Spleen (tissue), 13 donors: ENCODE measurements at regions of chr7 and their contacts with region 1.

Region 1: DNA sequence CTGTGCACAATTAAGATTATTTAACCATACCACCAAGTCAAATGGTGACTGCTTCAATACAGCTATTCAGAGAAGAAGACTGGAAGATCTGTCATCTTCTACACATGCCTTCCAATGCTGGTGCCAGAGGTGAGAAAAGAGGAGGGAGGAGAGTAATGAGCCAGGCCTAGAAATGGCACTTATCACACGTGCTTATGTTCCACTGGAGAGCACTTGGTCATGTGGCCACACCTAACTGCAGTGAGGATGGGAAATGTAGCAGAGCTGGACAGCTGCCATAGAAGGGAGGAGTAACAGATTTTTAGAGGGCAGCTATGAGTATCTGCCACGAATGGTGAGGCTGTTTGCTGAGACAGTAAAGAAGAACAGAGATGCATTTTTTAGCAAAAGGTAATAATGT is 77.1 kb downstream of the MPLKIP start:
- DNase-seq: no peak
- H3K4me3 ChIP-seq: no peak overlapping the region
- H3K27ac ChIP-seq: no peak overlapping the region
- H3K4me1 ChIP-seq: peaks cover 0 to 5% (median 2%) of the 10 kb centered on the region in 6 donors
- H3K27me3 ChIP-seq: no peaks in the 10 kb centered on the region
- CTCF ChIP-seq: no peak
- POLR2A ChIP-seq: no peak

Region 2: DNA sequence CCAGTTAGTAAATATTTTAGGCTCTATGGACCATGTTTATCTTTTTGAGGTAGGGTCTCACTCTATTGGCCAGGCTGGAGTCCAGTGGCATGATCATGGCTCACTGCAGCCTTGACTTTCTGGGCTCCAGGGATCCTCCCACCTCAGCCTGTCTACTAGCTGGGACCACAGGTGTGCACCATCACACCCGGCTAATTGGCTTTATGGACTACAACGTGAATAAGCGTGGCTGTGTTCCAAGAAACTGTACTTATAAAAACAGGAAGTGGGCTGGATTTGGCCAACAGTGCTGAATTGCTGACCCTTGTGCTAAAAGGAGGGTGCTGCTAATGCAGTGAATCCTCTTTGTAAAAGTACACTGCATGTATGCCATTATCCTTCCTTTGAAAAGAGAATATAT is 219.0 kb before region 1 on chr7:
- intact Hi-C with region 1: no loop called
- DNase-seq: no peak
- H3K4me3 ChIP-seq: no peak overlapping the region
- H3K27ac ChIP-seq: no peak overlapping the region
- H3K4me1 ChIP-seq: peaks cover 0 to 12% (median 5%) of the 10 kb centered on the region in 6 donors
- H3K27me3 ChIP-seq: peaks cover 0 to 32% (median 7%) of the 10 kb centered on the region in 7 donors
- CTCF ChIP-seq: no peak
- POLR2A ChIP-seq: no peak

Region 3: DNA sequence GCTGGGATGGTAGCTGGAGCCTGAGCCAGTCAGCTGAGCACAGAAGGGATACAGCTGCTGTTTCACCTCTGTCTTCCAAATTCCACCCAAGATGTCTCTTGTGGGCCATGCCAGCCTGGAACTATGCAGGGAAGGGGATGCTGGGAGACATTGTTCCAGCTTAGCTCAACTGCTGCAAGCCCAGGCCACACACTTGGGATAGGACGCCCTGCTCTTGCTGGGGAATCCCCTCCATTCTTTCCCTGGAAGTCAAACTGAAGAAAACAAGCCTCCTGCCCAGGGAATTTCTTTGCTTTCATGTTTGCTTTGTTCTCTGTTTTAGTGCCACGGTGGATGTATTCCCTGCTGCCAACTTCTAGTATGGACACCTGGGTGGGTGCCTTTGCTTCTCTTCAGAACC is 162.4 kb before region 1 on chr7:
- intact Hi-C with region 1: loop called (anchors 5 kb)
- DNase-seq: no peak
- H3K4me3 ChIP-seq: no peak overlapping the region
- H3K27ac ChIP-seq: no peak overlapping the region
- H3K4me1 ChIP-seq: peaks cover 0 to 6% (median 2%) of the 10 kb centered on the region in 6 donors
- H3K27me3 ChIP-seq: no peaks in the 10 kb centered on the region
- CTCF ChIP-seq: no peak
- POLR2A ChIP-seq: no peak

Region 4: GRCh38 chr7:39949980-39950472 is 107.3 kb before region 1 on chr7 and contains the start of gene CDK13:
- intact Hi-C with region 1: loop called (anchors 5 kb)
- DNase-seq: peak; percentile 98
- H3K4me3 ChIP-seq: peak within 1 kb of the TSS; percentile 67 to 97 (median 92)
- H3K27ac ChIP-seq: peak within 1 kb of the TSS; percentile 94 to 100 (median 100)
- H3K4me1 ChIP-seq: peaks cover 34 to 48% (median 43%) of the 10 kb centered on the region in 6 donors
- H3K27me3 ChIP-seq: no peaks in the 10 kb centered on the region
- CTCF ChIP-seq: peak in 3 of 11 experiments; percentile 15 to 27 (median 19)
- POLR2A ChIP-seq: peak in 1 of 3 donors; percentile 61
- total RNA-seq, gene CDK13: 61.2 to 125 (median 88.2) TPM